Caco-2 (cell line): ENCODE measurements at regions of chrX and their contacts with region 1.

Region 1: GRCh38 chrX:83469551-83469950 is 38.5 kb upstream of the POU3F4 start:
- DNase-seq: peak; percentile 28 to 38
- H3K4me3 ChIP-seq: no peak overlapping the region
- H3K4me3 Mint-ChIP-seq: no peak overlapping the region
- H3K27ac Mint-ChIP-seq: no peak overlapping the region
- H3K4me1 ChIP-seq: no peaks in the 10 kb centered on the region
- H3K4me1 Mint-ChIP-seq: no peaks in the 10 kb centered on the region
- H3K27me3 ChIP-seq: no peaks in the 10 kb centered on the region
- H3K27me3 Mint-ChIP-seq: no peaks in the 10 kb centered on the region
- CTCF ChIP-seq: peak in 1 of 2 experiments; percentile 29

Region 2: DNA sequence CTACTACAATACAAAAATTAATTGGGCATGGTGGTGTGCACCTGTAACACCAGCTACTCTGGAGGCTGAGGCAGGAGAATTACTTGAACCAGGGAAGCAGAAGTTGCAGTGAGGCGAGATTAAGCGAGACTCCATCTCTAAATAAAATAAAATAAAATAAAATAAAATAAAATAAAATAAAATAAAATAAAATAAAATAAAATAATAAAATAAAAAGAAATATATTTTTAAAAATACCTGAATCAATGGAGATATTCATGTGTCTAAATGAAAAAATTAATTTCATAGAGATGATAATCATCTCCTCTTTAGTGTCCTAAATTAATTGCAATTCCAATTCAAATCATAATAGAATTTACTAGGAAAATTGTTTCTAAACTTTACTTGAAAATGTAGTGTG is 367.6 kb before region 1 on chrX:
- CTCF ChIA-PET with region 1: no interaction called
- POLR2A ChIA-PET with region 1: no interaction called
- intact Hi-C with region 1: no loop called
- DNase-seq: no peak
- H3K4me3 ChIP-seq: no peak overlapping the region
- H3K4me3 Mint-ChIP-seq: no peak overlapping the region
- H3K27ac Mint-ChIP-seq: no peak overlapping the region
- H3K4me1 ChIP-seq: no peaks in the 10 kb centered on the region
- H3K4me1 Mint-ChIP-seq: no peaks in the 10 kb centered on the region
- H3K27me3 ChIP-seq: no peaks in the 10 kb centered on the region
- H3K27me3 Mint-ChIP-seq: no peaks in the 10 kb centered on the region
- CTCF ChIP-seq: no peak

Region 3: DNA sequence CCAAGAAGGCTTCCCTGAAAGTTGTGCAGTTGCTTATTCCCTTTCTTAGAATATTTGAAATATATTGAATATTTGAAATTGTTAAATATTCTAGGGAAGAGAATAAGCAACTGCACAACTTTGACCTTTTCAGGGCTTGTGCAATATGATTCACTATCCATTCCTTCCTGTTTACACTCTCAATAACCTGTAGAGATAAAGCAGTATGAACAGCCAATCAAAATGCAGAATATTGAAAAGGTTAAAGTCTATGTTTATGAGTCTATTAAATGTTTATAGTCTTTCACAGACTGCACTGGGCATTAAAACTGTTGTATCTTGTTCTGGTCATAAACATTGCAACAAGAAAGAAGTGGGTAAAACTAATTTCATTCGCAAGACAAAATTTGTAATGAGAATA is 52.4 kb after region 1 on chrX:
- CTCF ChIA-PET with region 1: no interaction called
- POLR2A ChIA-PET with region 1: no interaction called
- intact Hi-C with region 1: no loop called
- DNase-seq: no peak
- H3K4me3 ChIP-seq: no peak overlapping the region
- H3K4me3 Mint-ChIP-seq: no peak overlapping the region
- H3K27ac Mint-ChIP-seq: no peak overlapping the region
- H3K4me1 ChIP-seq: no peaks in the 10 kb centered on the region
- H3K4me1 Mint-ChIP-seq: no peaks in the 10 kb centered on the region
- H3K27me3 ChIP-seq: no peaks in the 10 kb centered on the region
- H3K27me3 Mint-ChIP-seq: no peaks in the 10 kb centered on the region
- CTCF ChIP-seq: no peak

Region 4: GRCh38 chrX:83630662-83631061 is 161.1 kb after region 1 on chrX:
- CTCF ChIA-PET with region 1: interaction called, 17 read pairs
- POLR2A ChIA-PET with region 1: no interaction called
- intact Hi-C with region 1: loop called (anchors 1 kb)
- DNase-seq: no peak
- H3K4me3 ChIP-seq: no peak overlapping the region
- H3K4me3 Mint-ChIP-seq: no peak overlapping the region
- H3K27ac Mint-ChIP-seq: no peak overlapping the region
- H3K4me1 ChIP-seq: no peaks in the 10 kb centered on the region
- H3K4me1 Mint-ChIP-seq: no peaks in the 10 kb centered on the region
- H3K27me3 ChIP-seq: no peaks in the 10 kb centered on the region
- H3K27me3 Mint-ChIP-seq: no peaks in the 10 kb centered on the region
- CTCF ChIP-seq: no peak

Region 5: DNA sequence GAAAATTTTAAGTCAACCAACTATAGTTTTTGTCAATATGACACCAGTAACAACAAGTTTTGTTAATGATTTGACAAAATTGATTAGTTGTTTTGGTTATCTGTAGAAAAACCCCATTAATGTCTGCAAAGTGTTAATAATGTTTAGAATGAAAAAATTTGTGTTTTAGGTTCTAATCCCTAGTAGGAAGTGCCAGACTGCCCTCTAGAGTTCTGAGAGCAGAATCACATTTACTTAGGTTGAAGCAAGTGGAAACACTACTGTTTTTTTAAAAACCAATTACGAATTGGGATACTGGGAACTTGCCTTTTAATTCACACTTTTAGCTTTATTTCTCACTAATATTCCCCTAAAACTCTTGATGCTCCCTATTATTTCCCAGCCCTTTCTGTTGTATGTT is 290.3 kb after region 1 on chrX:
- CTCF ChIA-PET with region 1: no interaction called
- POLR2A ChIA-PET with region 1: no interaction called
- intact Hi-C with region 1: loop called (anchors 2 kb)
- DNase-seq: no peak
- H3K4me3 ChIP-seq: no peak overlapping the region
- H3K4me3 Mint-ChIP-seq: no peak overlapping the region
- H3K27ac Mint-ChIP-seq: no peak overlapping the region
- H3K4me1 ChIP-seq: no peaks in the 10 kb centered on the region
- H3K4me1 Mint-ChIP-seq: no peaks in the 10 kb centered on the region
- H3K27me3 ChIP-seq: no peaks in the 10 kb centered on the region
- H3K27me3 Mint-ChIP-seq: no peaks in the 10 kb centered on the region
- CTCF ChIP-seq: peak in 1 of 2 experiments; percentile 37